ENCODE measurements at regions of chr2 and their contacts with region 1.

Region 1: DNA sequence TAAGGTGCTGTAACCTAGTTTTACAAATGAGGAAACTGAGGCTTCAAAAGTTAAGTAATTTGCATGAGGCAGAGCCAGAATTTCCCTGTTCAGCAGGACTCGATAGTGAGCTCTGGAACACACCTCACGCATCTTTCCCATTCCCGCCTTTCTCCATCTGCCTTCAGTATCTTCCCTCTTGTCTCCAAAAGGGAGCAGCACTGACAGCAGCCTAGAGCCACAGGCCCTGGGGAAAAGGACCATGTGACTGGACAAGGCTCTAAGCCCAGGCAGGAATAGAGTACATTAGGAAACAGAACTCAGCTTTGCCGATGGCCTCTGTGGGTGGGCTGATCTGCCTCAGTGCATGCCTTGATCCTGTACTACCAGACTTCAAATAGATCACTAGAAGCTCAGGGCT is 21.5 kb downstream of the GPR155 start:
- DNase-seq: no peak
- H3K4me3 ChIP-seq: no peak overlapping the region
- H3K27me3 ChIP-seq: no peaks in the 10 kb centered on the region
- CTCF ChIP-seq: no peak

Region 2: DNA sequence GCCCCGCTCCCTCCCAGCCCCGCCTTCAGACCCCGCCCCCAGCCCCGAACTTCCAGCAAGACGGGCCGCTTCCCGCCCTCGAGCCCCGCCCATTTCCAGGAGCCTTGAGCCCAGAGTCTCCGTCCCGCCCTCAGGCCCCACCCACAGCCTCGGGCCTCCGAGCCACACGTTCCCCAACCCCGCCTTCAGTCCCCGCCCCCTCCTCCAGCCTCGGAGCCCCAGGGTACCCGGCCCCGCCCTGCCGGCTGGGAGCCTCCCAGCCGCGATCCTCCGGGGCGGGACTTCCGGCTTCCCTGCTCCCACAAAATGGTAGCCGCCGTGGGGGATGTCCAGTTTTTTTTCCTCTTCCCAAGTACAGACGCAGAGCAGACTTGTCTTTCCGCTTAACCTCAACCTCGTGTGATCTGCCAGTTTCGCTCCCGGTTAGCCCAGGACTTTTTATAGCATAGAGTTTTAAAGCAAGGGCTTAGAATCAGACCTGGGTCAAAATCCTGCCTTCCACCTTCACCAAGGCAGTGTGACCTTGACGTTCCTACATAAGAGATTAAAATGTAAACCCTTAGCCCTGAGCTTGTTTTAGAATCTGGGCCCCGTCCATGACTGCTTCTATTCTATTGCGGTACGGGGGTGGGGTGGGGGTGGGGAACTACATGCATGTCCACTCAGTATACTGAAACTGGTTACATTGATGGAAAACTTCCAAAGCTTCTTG is 21.9 kb after region 1 on chr2:
- CTCF ChIA-PET with region 1: interaction called, 13 read pairs
- POLR2A ChIA-PET with region 1: no interaction called
- DNase-seq: peak; percentile 85
- H3K4me3 ChIP-seq: peak overlapping the region; percentile 79
- H3K27me3 ChIP-seq: no peaks in the 10 kb centered on the region
- CTCF ChIP-seq: no peak

Region 3: DNA sequence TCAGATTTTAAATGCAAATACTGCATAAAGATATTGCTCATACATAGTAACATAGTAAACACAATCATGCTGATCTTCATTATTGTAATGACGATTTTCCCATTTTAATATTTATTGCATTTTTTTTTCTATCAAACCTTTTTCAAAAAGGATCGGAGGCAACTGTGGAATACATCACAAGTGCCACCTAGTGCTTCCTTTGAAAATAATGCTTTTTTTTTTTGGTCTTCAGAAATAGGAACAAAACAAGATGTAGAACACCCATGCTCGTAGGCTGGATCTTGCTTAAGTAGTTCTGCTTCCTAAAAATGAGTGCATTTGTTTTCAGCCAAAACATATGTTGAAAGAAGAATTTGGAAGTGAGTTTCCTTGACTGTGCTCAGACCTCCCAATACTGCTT is 57.2 kb after region 1 on chr2:
- CTCF ChIA-PET with region 1: interaction called, 22 read pairs
- POLR2A ChIA-PET with region 1: no interaction called
- DNase-seq: no peak
- H3K4me3 ChIP-seq: no peak overlapping the region
- H3K27me3 ChIP-seq: peaks cover 4% of the 10 kb centered on the region; the same call in 1 of the 2 replicates
- CTCF ChIP-seq: peak; percentile 28; the same call in 1 of the 2 replicates

Region 4: DNA sequence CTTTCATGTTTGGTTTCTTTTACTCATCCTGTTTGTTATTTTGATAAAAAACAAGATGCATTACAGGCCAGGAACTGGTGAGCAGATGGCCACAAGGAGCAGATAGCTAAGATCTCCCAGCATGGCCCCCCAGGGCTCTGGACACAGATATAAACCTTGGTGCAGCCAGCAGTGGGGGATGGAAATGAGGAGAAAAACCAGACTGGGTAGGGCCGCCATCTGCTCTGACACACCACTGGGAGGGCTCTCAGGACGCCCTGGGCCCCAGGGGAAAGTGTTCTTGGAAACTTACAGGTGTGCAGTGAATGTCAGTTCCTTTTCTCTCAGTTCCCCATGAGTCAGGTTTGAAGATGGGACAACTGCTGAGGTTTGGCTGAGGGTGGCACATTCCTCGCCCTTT is 71.0 kb after region 1 on chr2:
- CTCF ChIA-PET with region 1: interaction called, 17 read pairs
- POLR2A ChIA-PET with region 1: interaction called, 3 read pairs
- DNase-seq: no peak
- H3K4me3 ChIP-seq: no peak overlapping the region
- H3K27me3 ChIP-seq: peaks cover 6% of the 10 kb centered on the region
- CTCF ChIP-seq: no peak

Region 5: DNA sequence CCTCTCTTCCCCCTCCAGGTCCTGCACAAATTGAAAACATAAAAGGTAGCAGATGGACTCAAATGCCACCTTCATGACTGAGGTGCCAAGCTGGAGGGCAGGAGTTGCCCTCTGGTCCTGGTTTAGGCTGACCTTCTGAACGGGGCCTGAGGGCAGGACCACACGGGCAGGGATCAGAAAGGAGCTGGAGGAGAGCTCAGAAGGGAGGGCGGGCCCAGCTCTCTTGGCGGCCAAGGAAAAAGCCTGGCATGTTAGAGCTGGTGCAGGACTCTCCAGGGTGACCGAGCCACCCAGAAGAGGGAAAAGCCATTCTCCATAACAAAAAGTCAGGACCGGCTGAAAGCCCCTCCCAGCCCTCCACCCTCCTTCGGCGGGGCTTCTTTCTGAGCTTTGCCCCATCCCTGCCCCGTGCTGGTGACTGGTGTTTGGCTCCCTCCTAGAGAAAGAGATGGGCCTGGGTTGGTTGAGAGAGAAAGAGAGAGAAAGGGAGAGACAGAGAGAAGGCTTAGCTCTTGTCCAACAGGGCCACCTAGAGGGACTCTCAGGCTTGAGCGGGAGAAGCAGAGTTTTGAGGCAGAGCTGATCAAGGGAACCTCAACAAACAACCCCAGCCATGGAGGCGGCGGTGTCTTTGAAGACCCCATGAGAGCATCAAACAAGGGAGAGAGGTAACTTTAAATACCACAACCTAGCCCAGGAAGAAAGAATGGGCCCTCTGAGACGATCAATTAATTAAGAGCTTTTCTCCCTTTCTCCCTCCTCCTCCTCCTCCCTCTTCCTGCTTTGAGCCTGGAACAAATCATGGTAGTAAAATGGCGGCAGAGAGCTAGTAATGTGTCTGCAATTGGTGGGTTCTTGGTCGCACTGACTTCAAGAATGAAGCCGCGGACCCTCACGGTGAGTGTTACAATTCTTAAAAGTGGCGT is 81.5 kb after region 1 on chr2:
- CTCF ChIA-PET with region 1: interaction called, 107 read pairs
- POLR2A ChIA-PET with region 1: no interaction called
- DNase-seq: no peak
- H3K4me3 ChIP-seq: no peak overlapping the region
- H3K27me3 ChIP-seq: peaks cover 4% of the 10 kb centered on the region; the same call in 1 of the 2 replicates
- CTCF ChIP-seq: peak; percentile 60

Region 6: GRCh38 chr2:174553811-174554493 is 88.6 kb after region 1 on chr2:
- CTCF ChIA-PET with region 1: interaction called, 107 read pairs
- POLR2A ChIA-PET with region 1: no interaction called
- DNase-seq: no peak
- H3K4me3 ChIP-seq: no peak overlapping the region
- H3K27me3 ChIP-seq: no peaks in the 10 kb centered on the region
- CTCF ChIP-seq: no peak

Region 7: DNA sequence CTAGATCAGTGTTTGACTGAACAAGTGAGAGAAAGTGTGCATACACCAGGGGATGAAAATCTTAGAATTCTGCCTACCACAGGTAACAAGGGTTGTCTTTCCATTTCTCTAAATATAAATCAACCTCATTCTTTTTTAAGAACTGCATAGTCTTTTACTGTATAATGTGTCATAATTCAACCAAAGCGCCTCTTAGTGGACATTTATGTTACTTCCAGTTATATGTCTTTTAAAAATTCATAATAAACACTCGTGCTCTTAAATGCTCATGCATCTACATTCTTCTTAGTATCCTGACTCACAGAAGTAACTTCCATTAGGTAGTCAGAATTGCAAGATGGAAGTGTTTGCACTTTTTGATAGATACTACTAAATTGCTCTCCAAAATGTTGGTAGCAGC is 222.8 kb after region 1 on chr2:
- CTCF ChIA-PET with region 1: interaction called, 31 read pairs
- POLR2A ChIA-PET with region 1: no interaction called
- DNase-seq: no peak
- H3K4me3 ChIP-seq: no peak overlapping the region
- H3K27me3 ChIP-seq: peaks cover 3% of the 10 kb centered on the region
- CTCF ChIP-seq: peak; percentile 42; the same call in 1 of the 2 replicates